ENCODE measurements at regions of chr12 and their contacts with region 1.

Region 1: DNA sequence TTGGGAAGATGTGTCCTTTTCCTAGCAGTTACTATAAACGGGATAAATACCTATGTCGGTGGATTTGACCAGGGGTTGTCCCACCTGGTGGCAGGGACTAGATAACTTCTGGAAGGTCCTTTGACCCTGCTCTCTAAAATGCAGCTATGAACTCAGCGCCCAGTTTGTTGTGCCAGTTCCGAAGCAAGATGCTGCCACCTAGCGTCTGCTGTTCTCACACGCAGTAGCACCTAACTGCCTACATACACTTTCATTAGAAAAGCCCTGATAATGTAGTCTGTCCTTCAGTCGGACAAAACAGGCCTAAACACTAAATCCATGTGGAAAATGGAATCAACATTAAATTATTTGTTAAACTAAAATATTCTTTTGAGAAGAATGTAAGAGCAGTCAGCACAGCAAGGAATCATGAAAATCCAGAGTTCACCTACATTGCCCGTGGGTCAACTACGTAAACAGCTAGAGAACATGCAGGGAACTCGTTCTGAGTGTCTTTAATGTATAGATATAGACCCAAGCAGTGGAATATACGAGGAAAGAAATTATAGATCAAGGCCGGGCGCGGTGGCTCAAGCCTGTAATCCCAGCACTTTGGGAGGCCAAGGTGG is 51.1 kb upstream of the CRACR2A start:
- DNase-seq: peak; percentile 71
- ATAC-seq: peak; percentile 68 to 76
- H3K4me3 ChIP-seq: no peak overlapping the region
- H3K27ac ChIP-seq: no peak overlapping the region
- H3K4me1 ChIP-seq: no peaks in the 10 kb centered on the region
- H3K27me3 ChIP-seq: no peaks in the 10 kb centered on the region
- CTCF ChIP-seq: peak; percentile 87

Region 2: GRCh38 chr12:3299929-3300832 is 503.8 kb before region 1 on chr12:
- intact Hi-C with region 1: loop called (anchors 10 kb)
- DNase-seq: peak; percentile 90
- ATAC-seq: peak; percentile 85 to 87
- H3K4me3 ChIP-seq: peak overlapping the region; percentile 37
- H3K27ac ChIP-seq: no peak overlapping the region
- H3K4me1 ChIP-seq: peaks cover 20% of the 10 kb centered on the region
- H3K27me3 ChIP-seq: peaks cover 15% of the 10 kb centered on the region
- CTCF ChIP-seq: peak; percentile 94